ENCODE measurements at regions of chr12 and their contacts with region 1.

Region 1: DNA sequence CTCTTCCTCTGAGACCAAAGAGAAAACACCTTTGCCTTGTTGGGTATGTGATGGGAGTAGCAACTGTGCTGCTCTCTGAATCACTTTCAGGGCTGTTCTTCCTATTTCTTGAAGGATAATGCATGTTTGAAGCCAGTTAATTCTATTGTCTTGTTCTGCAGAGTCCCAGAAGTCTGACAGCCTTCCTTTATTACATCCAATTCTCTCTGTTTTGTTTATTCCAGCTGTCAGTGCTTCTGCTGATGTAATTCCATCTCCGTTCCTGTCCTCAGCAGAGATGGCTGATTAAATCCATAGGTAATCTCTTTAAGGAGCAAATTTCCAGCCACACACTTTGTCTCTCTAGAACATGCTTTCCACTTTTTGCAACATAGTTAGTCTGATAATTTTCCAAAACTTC is 59.7 kb downstream of the MGAT4C start:
- DNase-seq: no peak
- ATAC-seq: no peak
- H3K4me3 ChIP-seq: no peak overlapping the region
- H3K27ac ChIP-seq: no peak overlapping the region
- H3K4me1 ChIP-seq: no peaks in the 10 kb centered on the region
- H3K27me3 ChIP-seq: no peaks in the 10 kb centered on the region
- CTCF ChIP-seq: no peak
- EP300 ChIP-seq: no peak
- POLR2A ChIP-seq: no peak
- RAD21 ChIP-seq: no peak

Region 2: GRCh38 chr12:86117711-86118110 is 78.8 kb before region 1 on chr12:
- CTCF ChIA-PET with region 1: no interaction called
- POLR2A ChIA-PET with region 1: interaction called, 10 read pairs
- RAD21 ChIA-PET with region 1: no interaction called
- SMC1A ChIA-PET with region 1: no interaction called
- in situ Hi-C with region 1: no loop called
- intact Hi-C with region 1: no loop called
- DNase-seq: no peak
- ATAC-seq: no peak
- H3K4me3 ChIP-seq: no peak overlapping the region
- H3K27ac ChIP-seq: no peak overlapping the region
- H3K4me1 ChIP-seq: no peaks in the 10 kb centered on the region
- H3K27me3 ChIP-seq: no peaks in the 10 kb centered on the region
- CTCF ChIP-seq: no peak
- EP300 ChIP-seq: no peak
- POLR2A ChIP-seq: no peak
- RAD21 ChIP-seq: no peak